ENCODE measurements at regions of chr16 and their contacts with region 1.

Region 1: GRCh38 chr16:11774065-11774626 is 22.9 kb downstream of the ZC3H7A start:
- DNase-seq: no peak
- ATAC-seq: no peak
- H3K4me3 ChIP-seq: no peak overlapping the region
- H3K27ac ChIP-seq: no peak overlapping the region
- H3K4me1 ChIP-seq: no peaks in the 10 kb centered on the region
- CTCF ChIP-seq: no peak
- EP300 ChIP-seq: no peak
- POLR2A ChIP-seq: no peak
- RAD21 ChIP-seq: no peak

Region 2: DNA sequence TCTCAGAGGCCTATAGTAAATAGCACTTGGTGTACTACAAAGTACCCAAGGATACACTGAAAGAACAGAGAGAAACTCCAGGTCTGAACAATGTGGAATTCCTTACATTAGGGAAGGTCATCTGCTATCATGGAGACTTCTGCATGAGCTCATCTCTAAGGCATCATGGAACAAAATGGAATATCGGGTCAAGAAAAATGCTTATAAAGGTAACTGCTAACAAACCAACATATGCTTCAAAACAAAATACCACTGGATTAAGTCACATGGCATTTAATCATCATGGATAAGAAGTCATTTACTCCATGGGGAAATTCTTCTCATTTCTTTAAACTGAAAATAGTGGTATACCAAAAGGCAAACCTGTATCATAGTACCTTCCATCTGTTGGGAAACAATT is 65.7 kb before region 1 on chr16:
- CTCF ChIA-PET with region 1: no interaction called
- POLR2A ChIA-PET with region 1: no interaction called
- DNase-seq: no peak
- ATAC-seq: no peak
- H3K4me3 ChIP-seq: no peak overlapping the region
- H3K27ac ChIP-seq: peak overlapping the region in 1 of 2 experiments; percentile 26; a peak in 1 of 6 replicates
- H3K4me1 ChIP-seq: peaks cover 13% of the 10 kb centered on the region
- CTCF ChIP-seq: no peak
- EP300 ChIP-seq: no peak
- POLR2A ChIP-seq: no peak
- RAD21 ChIP-seq: no peak

Region 3: DNA sequence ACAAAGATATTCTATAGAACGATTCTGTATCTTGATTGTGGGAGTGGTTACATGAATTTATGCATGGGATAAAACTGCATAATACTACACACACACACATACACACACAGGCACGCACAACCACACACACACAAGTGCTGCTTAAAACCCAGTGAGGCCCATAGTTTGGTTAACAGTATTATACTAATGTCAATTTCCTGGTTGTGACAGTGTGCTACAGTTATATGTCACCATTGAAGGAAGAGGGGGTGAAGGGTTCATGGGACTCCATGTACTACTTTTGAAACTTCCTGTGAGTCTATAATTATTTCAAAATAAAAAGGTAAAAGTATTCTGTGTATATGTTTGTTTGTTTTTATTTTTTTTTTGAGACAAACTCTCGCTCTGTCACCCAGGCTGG is 14.8 kb after region 1 on chr16:
- CTCF ChIA-PET with region 1: interaction called, 12 read pairs
- POLR2A ChIA-PET with region 1: no interaction called
- DNase-seq: no peak
- ATAC-seq: no peak
- H3K4me3 ChIP-seq: no peak overlapping the region
- H3K27ac ChIP-seq: no peak overlapping the region
- H3K4me1 ChIP-seq: peaks cover 29% of the 10 kb centered on the region
- CTCF ChIP-seq: no peak
- EP300 ChIP-seq: no peak
- POLR2A ChIP-seq: no peak
- RAD21 ChIP-seq: no peak

Region 4: GRCh38 chr16:11871193-11871592 is 97.0 kb after region 1 on chr16:
- CTCF ChIA-PET with region 1: no interaction called
- POLR2A ChIA-PET with region 1: no interaction called
- DNase-seq: peak in 1 of 2 experiments; percentile 53
- ATAC-seq: peak; percentile 50 to 77; a peak in 3 of 6 replicates
- H3K4me3 ChIP-seq: no peak overlapping the region
- H3K27ac ChIP-seq: no peak overlapping the region
- H3K4me1 ChIP-seq: peaks cover 16% of the 10 kb centered on the region
- CTCF ChIP-seq: 0 out of 3 replicates have a peak, but pooled peaks have one; percentile 16
- EP300 ChIP-seq: no peak
- POLR2A ChIP-seq: no peak
- RAD21 ChIP-seq: no peak

Region 5: GRCh38 chr16:11892761-11893160 is 118.6 kb after region 1 on chr16:
- CTCF ChIA-PET with region 1: no interaction called
- POLR2A ChIA-PET with region 1: no interaction called
- DNase-seq: no peak
- ATAC-seq: no peak
- H3K4me3 ChIP-seq: no peak overlapping the region
- H3K27ac ChIP-seq: no peak overlapping the region
- H3K4me1 ChIP-seq: peaks cover 7% of the 10 kb centered on the region; the same call in 1 of the 3 replicates
- CTCF ChIP-seq: no peak
- EP300 ChIP-seq: no peak
- POLR2A ChIP-seq: no peak
- RAD21 ChIP-seq: no peak